Sigmoid colon (tissue), 7 donors: ENCODE measurements at regions of chr16 and their contacts with region 1.

Region 1: DNA sequence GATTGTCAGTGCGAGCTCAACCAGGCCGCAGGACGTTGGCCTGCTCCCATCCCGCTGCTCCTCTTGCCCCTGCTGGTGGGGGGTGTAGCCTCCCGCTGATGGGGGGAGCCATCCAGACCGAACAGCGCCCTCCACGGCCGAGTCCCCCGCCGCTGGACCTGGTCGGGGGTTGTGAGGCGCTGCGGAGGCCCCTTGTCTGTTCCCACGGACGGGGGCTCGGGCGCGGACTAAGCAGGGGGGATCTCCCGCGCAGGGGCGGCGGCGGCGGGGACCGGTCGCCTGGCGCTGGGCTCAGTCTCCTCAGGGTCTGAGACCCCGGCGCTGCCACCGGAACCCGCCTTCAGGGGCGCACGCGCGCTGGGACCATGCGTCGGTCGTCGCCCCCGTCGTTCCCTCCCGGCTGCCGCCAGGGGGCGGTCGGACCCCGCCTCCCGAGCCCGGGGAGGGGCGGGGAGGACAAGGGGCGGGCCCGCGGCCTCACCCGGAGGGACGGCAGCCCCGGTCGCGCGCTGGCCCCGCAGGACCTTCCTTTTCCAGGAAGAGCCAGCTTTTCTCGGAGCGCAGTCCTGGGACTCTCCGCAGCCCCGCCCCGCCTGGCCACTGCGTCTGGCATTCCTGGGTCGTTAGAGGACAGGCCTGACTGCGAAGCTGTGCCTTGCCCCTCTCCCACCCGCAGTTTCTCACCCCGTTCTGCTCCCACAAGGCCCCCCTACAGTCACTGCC is 6.3 kb upstream of the IL32 start:
- DNase-seq: peak; percentile 91
- H3K4me3 ChIP-seq: peak overlapping the region; percentile 70 to 91 (median 80)
- H3K27ac ChIP-seq: peak overlapping the region; percentile 65 to 74 (median 66)
- H3K4me1 ChIP-seq: peaks cover 0 to 22% (median 19%) of the 10 kb centered on the region in 4 donors
- H3K27me3 ChIP-seq: peaks cover 0 to 12% (median 0%) of the 10 kb centered on the region in 3 donors
- CTCF ChIP-seq: peak; percentile 65 to 94 (median 81)
- EP300 ChIP-seq: no peak
- POLR2A ChIP-seq: no peak

Region 2: DNA sequence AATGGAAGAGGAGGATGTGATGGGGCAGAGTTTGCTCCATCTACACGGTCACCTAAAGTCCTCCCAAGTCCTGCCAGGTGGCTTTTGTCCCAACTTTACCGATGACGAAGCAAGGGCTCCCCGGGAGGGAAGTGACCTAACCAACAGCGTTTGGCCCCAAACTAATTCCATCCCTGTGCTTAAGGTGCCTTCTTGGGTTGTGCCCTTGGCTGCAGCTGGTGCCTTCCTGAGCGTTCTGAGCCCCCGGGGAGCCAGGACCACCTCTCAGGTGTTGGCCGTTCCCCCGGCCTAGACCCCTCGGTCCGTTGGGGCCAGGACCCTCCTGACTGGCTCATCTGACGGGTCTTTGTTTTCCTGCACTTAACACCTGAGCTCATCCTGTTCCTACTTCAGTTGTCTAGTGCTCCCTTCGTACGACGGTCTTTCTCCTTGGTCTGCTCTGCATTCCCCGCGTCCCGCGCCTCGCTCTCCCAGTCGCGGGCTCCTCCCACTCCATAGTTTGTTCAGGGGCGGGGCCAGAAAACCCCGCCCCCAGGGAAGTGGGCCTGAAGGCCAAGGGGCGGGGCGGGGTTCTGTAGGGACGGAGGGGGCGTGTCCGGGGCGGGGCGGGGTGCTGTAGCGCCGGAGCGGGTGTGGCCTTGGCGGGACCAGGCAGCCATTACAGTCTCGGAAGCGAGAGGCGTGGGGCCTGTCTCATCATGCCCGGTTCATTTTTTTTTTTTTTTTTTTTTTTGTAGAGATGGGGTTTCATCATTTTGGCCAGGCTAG is 40.8 kb after region 1 on chr16:
- intact Hi-C with region 1: no loop called
- DNase-seq: peak; percentile 92
- H3K4me3 ChIP-seq: peak overlapping the region in 1 of 4 donors; percentile 25
- H3K27ac ChIP-seq: peak overlapping the region in 1 of 4 donors; percentile 19
- H3K4me1 ChIP-seq: peaks cover 0 to 11% (median 7%) of the 10 kb centered on the region in 4 donors
- H3K27me3 ChIP-seq: peaks cover 6 to 40% (median 24%) of the 10 kb centered on the region in 3 donors
- CTCF ChIP-seq: no peak
- EP300 ChIP-seq: no peak
- POLR2A ChIP-seq: no peak

Region 3: GRCh38 chr16:3112058-3112880 is 53.1 kb after region 1 on chr16 and contains the start of gene ZNF205:
- intact Hi-C with region 1: no loop called
- DNase-seq: peak; percentile 87
- H3K4me3 ChIP-seq: peak within 1 kb of the TSS; percentile 76 to 86 (median 80)
- H3K27ac ChIP-seq: peak within 1 kb of the TSS; percentile 75 to 80 (median 77)
- H3K4me1 ChIP-seq: peaks cover 0 to 33% (median 26%) of the 10 kb centered on the region in 4 donors
- H3K27me3 ChIP-seq: no peaks in the 10 kb centered on the region
- CTCF ChIP-seq: no peak
- EP300 ChIP-seq: no peak
- POLR2A ChIP-seq: no peak
- total RNA-seq, gene ZNF205: 15.8 to 17.5 (median 16.7) TPM

Region 4: DNA sequence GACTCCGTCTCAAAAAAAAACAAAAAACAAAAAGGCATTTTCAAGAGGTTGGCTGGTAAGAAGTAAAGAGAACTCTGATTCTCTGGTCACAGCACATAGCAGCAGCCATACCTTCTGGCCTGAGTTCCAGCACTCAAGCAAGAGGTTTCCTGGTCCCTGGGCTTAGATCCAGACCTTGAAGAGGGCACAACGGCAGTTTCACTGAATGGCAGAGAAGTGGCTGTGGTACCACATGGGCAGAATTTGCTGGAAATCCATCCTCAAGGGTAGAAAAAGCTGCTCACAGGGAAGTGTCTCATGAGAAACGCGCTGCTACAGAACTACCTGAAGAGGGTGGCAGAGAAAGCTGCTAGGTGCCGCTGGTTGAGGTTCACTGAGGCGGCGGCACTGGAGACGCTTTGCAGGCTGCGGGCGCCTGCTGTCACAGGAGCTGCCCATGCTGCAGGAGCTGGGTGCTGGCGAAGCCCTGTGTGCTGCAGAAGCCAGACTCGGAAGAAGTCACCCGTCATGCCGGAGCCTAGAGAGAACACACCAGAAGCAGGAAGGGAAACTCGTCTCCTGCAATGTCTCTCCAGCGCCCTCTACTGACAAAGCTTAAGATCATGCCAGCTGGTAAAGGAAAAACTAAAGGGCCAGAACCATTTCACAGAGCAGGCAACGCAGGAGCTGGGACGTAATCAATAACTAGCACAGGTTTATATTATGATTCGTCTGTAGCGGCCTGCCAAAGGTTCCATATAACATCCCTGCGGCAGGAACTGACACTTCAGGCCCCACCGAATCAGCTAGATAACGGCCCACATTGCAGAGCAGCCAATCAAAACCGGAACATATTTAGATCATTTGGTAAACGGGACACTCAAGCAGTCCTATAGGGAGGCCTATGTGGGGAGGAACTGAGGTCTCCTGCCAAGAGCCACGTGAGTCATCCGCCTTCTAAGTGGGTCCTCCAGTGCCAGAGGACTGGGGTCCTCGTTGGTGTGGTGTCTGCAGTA is 70.3 kb after region 1 on chr16:
- intact Hi-C with region 1: loop called (anchors 2 kb)
- DNase-seq: peak; percentile 86
- H3K4me3 ChIP-seq: peak overlapping the region; percentile 22 to 50 (median 48)
- H3K27ac ChIP-seq: peak overlapping the region; percentile 58 to 75 (median 70)
- H3K4me1 ChIP-seq: peaks cover 0 to 39% (median 34%) of the 10 kb centered on the region in 4 donors
- H3K27me3 ChIP-seq: no peaks in the 10 kb centered on the region
- CTCF ChIP-seq: peak; percentile 77 to 93 (median 85)
- EP300 ChIP-seq: no peak
- POLR2A ChIP-seq: no peak

Region 5: DNA sequence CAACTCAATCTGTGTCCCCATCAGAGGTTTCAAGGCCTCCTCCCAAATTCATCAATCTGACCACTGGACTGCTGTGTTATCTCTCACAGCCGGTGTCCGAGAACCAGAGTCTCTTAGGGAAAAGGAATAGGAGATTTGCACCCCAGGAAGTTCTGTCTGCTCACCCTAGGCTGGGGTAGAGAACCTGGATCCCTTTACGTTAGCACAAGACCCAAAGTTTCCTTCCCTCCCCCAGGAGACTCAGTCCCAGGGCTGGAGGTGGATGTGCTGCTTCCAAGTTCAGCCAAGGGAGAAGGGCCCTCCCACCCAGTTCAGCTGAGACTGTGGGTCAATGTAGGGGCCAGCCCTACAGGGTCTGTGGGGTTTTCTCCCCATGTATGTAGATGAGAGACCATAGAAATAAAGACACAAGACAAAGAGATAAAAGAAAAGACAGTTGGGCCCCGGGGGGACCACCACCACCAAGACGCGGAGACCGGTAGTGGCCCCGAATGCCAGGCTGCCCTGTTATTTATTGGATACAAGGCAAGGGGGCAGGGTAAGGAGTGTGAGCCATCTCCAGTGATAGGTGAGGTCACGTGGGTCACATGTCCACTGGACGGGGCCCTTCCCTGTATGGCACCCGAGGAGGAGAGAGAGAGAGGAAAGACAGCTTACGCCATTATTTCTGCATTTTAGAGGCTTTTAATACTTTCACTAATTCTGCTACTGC is 106.1 kb after region 1 on chr16:
- intact Hi-C with region 1: loop called (anchors 2 kb)
- DNase-seq: no peak
- H3K4me3 ChIP-seq: peak overlapping the region in 3 of 4 donors; percentile 19 to 33 (median 27)
- H3K27ac ChIP-seq: peak overlapping the region in 1 of 4 donors; percentile 42
- H3K4me1 ChIP-seq: peaks cover 0 to 9% (median 4%) of the 10 kb centered on the region in 4 donors
- H3K27me3 ChIP-seq: peaks cover 14 to 56% (median 15%) of the 10 kb centered on the region in 3 donors
- CTCF ChIP-seq: no peak
- EP300 ChIP-seq: no peak
- POLR2A ChIP-seq: no peak